Posterior vena cava (tissue), 2 donors: ENCODE measurements at regions of chr13 and their contacts with region 1.

Region 1: GRCh38 chr13:43364210-43365038 is 341.0 kb downstream of the DNAJC15 start:
- DNase-seq: no peak

Region 2: DNA sequence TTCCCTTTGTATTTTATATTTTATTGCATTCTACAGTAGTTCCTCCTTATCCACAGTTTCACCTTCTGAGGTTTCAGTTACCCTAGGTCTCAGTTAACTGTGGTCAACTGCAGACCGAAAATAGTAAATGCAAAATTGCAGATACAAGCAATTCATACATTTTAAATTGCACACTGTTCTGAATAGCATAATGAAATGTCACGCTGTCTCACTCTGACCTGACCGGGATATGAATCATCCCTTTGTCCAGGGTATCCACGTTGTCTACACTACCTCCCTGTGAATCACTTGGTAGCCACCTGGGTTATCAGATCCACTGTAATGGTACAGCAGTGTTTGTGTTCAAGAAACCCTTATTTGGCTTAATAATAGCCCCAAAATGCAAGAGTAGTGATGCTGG is 16.0 kb before region 1 on chr13:
- intact Hi-C with region 1: no loop called
- DNase-seq: no peak

Region 3: GRCh38 chr13:43383493-43384165 is 19.2 kb after region 1 on chr13:
- intact Hi-C with region 1: loop called in 1 of 2 experiments (anchors 2 kb)
- DNase-seq: no peak